Heart left ventricle (tissue), 16 donors: ENCODE measurements at regions of chr4 and their contacts with region 1.

Region 1: DNA sequence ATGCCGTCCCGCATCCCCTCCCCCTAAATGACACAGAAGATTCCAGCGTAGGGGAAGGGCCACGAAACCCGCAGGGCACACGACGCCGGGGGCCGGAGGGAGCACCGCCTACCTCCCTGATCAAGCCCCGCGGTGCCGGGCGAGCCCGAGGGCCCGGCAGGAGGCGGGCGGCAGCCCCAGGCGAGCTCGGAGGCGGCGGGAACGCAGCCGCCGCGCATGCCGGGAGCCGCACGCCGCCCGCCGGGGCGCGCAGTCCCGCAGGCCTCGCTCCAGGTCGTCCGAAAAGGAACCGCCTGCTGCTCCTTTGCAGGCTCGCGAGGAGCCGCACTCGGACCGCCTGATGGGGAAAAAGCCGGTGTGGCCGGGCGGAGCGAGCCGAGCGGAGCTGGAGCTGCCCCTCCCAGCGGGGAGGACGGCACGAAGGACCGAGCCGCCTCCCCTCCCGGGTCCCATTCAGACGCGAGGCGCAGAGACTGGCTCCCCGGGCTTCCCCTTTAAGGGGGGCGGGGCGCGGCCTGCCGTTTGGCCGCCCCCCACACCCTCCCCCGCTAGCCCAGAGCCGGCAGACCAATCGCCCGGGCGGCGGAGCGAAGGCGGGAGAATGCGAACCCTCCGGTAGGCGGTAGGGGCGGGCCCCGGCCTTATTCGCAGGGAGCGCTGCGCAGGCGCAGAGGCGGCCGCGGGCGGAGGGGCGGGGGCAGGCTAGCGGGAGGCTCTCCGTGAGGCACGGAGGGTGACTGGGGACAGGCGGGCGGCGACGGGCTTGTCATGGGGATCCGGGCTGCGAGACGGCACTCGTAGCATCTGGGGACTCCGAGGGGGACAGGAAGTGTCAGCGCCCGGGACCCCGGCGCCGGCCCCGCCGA is 561 bp upstream of the ING2 start:
- DNase-seq: peak; percentile 99 to 100 (median 99)
- ATAC-seq: peak; percentile 95 to 98 (median 98)
- H3K4me3 ChIP-seq: peak overlapping the region; percentile 70 to 97 (median 90)
- H3K27ac ChIP-seq: peak overlapping the region; percentile 81 to 99 (median 96)
- H3K4me1 ChIP-seq: peaks cover 0 to 47% (median 12%) of the 10 kb centered on the region in 12 donors
- H3K27me3 ChIP-seq: no peaks in the 10 kb centered on the region
- CTCF ChIP-seq: peak in 8 of 12 donors; percentile 11 to 47 (median 20)
- POLR2A ChIP-seq: peak in 1 of 2 donors; percentile 69

Region 2: GRCh38 chr4:183444214-183445066 is 59.9 kb before region 1 on chr4 and contains the start of gene CDKN2AIP:
- intact Hi-C with region 1: loop called in 3 of 10 experiments (anchors 1 to 5 kb)
- DNase-seq: peak; percentile 94 to 97 (median 95)
- ATAC-seq: peak; percentile 87 to 96 (median 94)
- H3K4me3 ChIP-seq: peak within 1 kb of the TSS; percentile 70 to 98 (median 90)
- H3K27ac ChIP-seq: peak within 1 kb of the TSS; percentile 97 to 99 (median 99)
- H3K4me1 ChIP-seq: peaks cover 8 to 55% (median 41%) of the 10 kb centered on the region in 12 donors
- H3K27me3 ChIP-seq: no peaks in the 10 kb centered on the region
- CTCF ChIP-seq: peak in 5 of 12 donors; percentile 5 to 40 (median 13)
- POLR2A ChIP-seq: peak in 1 of 2 donors; percentile 99
- total RNA-seq, gene CDKN2AIP: 8.0 to 12.5 (median 9.7) TPM

Region 3: GRCh38 chr4:183532821-183533220 is 28.5 kb after region 1 on chr4:
- intact Hi-C with region 1: no loop called
- DNase-seq: no peak
- ATAC-seq: no peak
- H3K4me3 ChIP-seq: no peak overlapping the region
- H3K27ac ChIP-seq: no peak overlapping the region
- H3K4me1 ChIP-seq: no peaks in the 10 kb centered on the region
- H3K27me3 ChIP-seq: peaks cover 0 to 21% (median 2%) of the 10 kb centered on the region in 9 donors
- CTCF ChIP-seq: no peak
- POLR2A ChIP-seq: no peak

Region 4: GRCh38 chr4:183659029-183659871 is 155.0 kb after region 1 on chr4 and contains the starts of genes RWDD4 and TRAPPC11:
- intact Hi-C with region 1: loop called (anchors 2 to 10 kb)
- DNase-seq: peak; percentile 98 to 99 (median 99)
- ATAC-seq: peak; percentile 100
- H3K4me3 ChIP-seq: peak within 1 kb of the TSS; percentile 51 to 95 (median 85)
- H3K27ac ChIP-seq: peak within 1 kb of the TSS; percentile 27 to 93 (median 88)
- H3K4me1 ChIP-seq: peaks cover 3 to 34% (median 21%) of the 10 kb centered on the region in 12 donors
- H3K27me3 ChIP-seq: no peaks in the 10 kb centered on the region
- CTCF ChIP-seq: peak in 6 of 12 donors; percentile 11 to 41 (median 24)
- POLR2A ChIP-seq: peak; percentile 80 to 98
- total RNA-seq, gene RWDD4: 13.2 to 20.4 (median 15.8) TPM
- total RNA-seq, gene TRAPPC11: 16.3 to 28.5 (median 22.0) TPM

Region 5: GRCh38 chr4:184114431-184114830 is 610.1 kb after region 1 on chr4:
- intact Hi-C with region 1: no loop called
- DNase-seq: no peak
- ATAC-seq: no peak
- H3K4me3 ChIP-seq: no peak overlapping the region
- H3K27ac ChIP-seq: no peak overlapping the region
- H3K4me1 ChIP-seq: no peaks in the 10 kb centered on the region
- H3K27me3 ChIP-seq: no peaks in the 10 kb centered on the region
- CTCF ChIP-seq: no peak
- POLR2A ChIP-seq: no peak